ENCODE measurements at regions of chr2 and their contacts with region 1.

Region 1: GRCh38 chr2:207769597-207770486 is at the start of gene FZD5:
- DNase-seq: peak; percentile 92 to 96
- ATAC-seq: peak; percentile 84 to 87
- H3K4me3 ChIP-seq: peak within 1 kb of the TSS; percentile 81 to 95 (median 86)
- H3K27ac ChIP-seq: peak within 1 kb of the TSS; percentile 88 to 98 (median 92)
- H3K4me1 ChIP-seq: peaks cover 13 to 25% of the 10 kb centered on the region in 2 donors
- H3K27me3 ChIP-seq: no peaks in the 10 kb centered on the region
- CTCF ChIP-seq: peak; percentile 23 to 64 (median 60)
- POLR2A ChIP-seq: peak; percentile 97 to 98
- total RNA-seq, gene FZD5: 3.0 to 4.8 (median 3.4) TPM

Region 2: GRCh38 chr2:206159346-206160124 is 1610.3 kb before region 1 on chr2 and contains the starts of genes EEF1B2 and NDUFS1:
- in situ Hi-C with region 1: no loop called
- intact Hi-C with region 1: loop called (anchors 5 kb)
- DNase-seq: peak; percentile 97
- ATAC-seq: peak; percentile 91 to 93
- H3K4me3 ChIP-seq: peak within 1 kb of the TSS; percentile 70 to 95 (median 90)
- H3K27ac ChIP-seq: peak within 1 kb of the TSS; percentile 92 to 97 (median 96)
- H3K4me1 ChIP-seq: peaks cover 35 to 51% of the 10 kb centered on the region in 2 donors
- H3K27me3 ChIP-seq: no peaks in the 10 kb centered on the region
- CTCF ChIP-seq: no peak
- POLR2A ChIP-seq: peak; percentile 62 to 80
- total RNA-seq, gene EEF1B2: 370 to 590 (median 448) TPM
- total RNA-seq, gene NDUFS1: 253 to 385 (median 275) TPM

Region 3: GRCh38 chr2:207625018-207625907 is 144.6 kb before region 1 on chr2 and contains the start of gene METTL21A:
- in situ Hi-C with region 1: no loop called
- intact Hi-C with region 1: loop called (anchors 1 kb)
- DNase-seq: peak; percentile 78 to 88
- ATAC-seq: peak; percentile 79 to 81
- H3K4me3 ChIP-seq: peak within 1 kb of the TSS; percentile 74 to 91 (median 86)
- H3K27ac ChIP-seq: peak within 1 kb of the TSS; percentile 91 to 96 (median 93)
- H3K4me1 ChIP-seq: peaks cover 7 to 11% of the 10 kb centered on the region in 2 donors
- H3K27me3 ChIP-seq: no peaks in the 10 kb centered on the region
- CTCF ChIP-seq: peak in 3 of 5 experiments; percentile 33 to 51 (median 48)
- POLR2A ChIP-seq: peak; percentile 73 to 89
- total RNA-seq, gene METTL21A: 9.1 to 20.8 (median 13.9) TPM

Region 4: DNA sequence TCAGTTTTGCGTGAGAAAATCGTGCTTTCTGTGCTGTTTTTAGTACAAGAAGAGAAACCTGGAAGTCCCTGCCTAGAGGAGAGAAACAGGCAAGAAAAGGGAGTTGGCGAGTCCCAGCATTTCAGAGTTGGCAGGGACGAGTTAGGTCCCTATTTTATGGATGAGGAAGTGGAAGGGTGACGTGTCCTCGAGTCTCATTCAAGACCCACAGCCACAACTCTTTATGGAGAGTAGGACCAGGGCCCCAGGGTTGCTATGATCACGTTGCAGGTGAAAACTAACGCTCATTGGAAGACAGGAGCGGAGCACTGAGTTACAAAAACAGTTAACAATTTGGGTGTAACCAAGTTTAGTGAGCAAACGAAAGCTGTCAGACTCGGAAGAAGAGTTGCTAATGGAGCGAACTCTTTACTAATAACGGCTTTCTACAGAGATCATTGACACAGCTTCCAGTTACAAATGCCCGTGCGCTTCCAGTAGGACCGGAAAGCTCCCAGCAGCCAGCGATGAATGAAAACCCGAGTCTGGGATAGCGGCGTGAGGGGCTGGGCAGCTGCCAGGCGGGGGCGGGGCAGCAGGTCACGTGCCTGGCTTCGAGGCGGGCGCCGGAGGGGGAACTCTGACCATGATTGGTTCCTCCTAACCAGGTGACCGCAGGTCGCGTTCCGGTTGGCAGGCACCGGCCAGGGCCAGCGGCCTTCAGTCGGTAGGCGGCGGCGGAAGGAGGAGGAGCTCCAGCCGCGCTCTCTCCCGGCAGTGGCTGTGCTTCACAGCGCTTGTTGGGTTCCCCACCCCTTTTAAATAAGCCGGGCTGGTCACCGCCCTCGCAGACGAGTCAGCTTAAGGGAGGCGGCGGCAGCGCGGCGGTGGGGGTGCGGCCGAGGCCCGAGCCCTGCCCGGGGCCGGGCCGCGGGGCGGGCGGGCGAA is 58.8 kb before region 1 on chr2 and contains the start of gene CCNYL1:
- in situ Hi-C with region 1: no loop called
- intact Hi-C with region 1: loop called (anchors 2 kb)
- DNase-seq: peak; percentile 99
- ATAC-seq: peak; percentile 96 to 97
- H3K4me3 ChIP-seq: peak within 1 kb of the TSS; percentile 79 to 95 (median 89)
- H3K27ac ChIP-seq: peak within 1 kb of the TSS; percentile 76 to 88 (median 80)
- H3K4me1 ChIP-seq: peaks cover 18 to 19% of the 10 kb centered on the region in 2 donors
- H3K27me3 ChIP-seq: no peaks in the 10 kb centered on the region
- CTCF ChIP-seq: peak in 4 of 5 experiments; percentile 26 to 52 (median 45)
- POLR2A ChIP-seq: peak; percentile 87 to 98
- total RNA-seq, gene CCNYL1: 3.3 to 10.1 (median 7.1) TPM

Region 5: DNA sequence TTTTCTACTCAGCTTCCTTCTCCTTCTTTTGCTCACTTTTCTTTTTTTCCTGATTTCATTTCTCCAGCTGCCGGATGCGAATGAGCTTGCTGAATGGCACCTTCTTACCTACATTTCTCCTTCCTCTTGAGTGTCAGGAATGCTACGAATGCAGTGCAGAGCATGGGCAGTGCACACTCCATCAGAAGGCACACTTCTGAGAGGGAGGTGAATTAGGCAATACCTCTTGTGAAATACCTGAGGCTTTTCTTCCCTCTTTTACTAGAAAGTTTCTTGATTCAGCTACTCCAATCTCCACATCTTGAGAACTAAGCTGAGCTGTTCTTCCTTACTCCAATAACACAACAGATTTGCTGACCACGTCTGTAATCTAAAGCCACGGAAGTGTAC is 204.4 kb after region 1 on chr2:
- in situ Hi-C with region 1: no loop called
- intact Hi-C with region 1: loop called (anchors 5 kb)
- DNase-seq: no peak
- ATAC-seq: no peak
- H3K4me3 ChIP-seq: no peak overlapping the region
- H3K27ac ChIP-seq: no peak overlapping the region
- H3K4me1 ChIP-seq: peaks cover 5 to 9% of the 10 kb centered on the region in 2 donors
- H3K27me3 ChIP-seq: no peaks in the 10 kb centered on the region
- CTCF ChIP-seq: no peak
- POLR2A ChIP-seq: no peak

Region 6: GRCh38 chr2:208025037-208025813 is 255.4 kb after region 1 on chr2 and contains the start of gene PLEKHM3:
- in situ Hi-C with region 1: no loop called
- intact Hi-C with region 1: loop called (anchors 1 kb)
- DNase-seq: peak; percentile 73 to 82
- ATAC-seq: peak; percentile 96 to 99
- H3K4me3 ChIP-seq: peak within 1 kb of the TSS; percentile 83 to 91 (median 88)
- H3K27ac ChIP-seq: peak within 1 kb of the TSS; percentile 78 to 93 (median 88)
- H3K4me1 ChIP-seq: peaks cover 24 to 33% of the 10 kb centered on the region in 2 donors
- H3K27me3 ChIP-seq: no peaks in the 10 kb centered on the region
- CTCF ChIP-seq: no peak
- POLR2A ChIP-seq: peak; percentile 48 to 76
- total RNA-seq, gene PLEKHM3: 5.6 to 8.8 (median 6.8) TPM

Region 7: DNA sequence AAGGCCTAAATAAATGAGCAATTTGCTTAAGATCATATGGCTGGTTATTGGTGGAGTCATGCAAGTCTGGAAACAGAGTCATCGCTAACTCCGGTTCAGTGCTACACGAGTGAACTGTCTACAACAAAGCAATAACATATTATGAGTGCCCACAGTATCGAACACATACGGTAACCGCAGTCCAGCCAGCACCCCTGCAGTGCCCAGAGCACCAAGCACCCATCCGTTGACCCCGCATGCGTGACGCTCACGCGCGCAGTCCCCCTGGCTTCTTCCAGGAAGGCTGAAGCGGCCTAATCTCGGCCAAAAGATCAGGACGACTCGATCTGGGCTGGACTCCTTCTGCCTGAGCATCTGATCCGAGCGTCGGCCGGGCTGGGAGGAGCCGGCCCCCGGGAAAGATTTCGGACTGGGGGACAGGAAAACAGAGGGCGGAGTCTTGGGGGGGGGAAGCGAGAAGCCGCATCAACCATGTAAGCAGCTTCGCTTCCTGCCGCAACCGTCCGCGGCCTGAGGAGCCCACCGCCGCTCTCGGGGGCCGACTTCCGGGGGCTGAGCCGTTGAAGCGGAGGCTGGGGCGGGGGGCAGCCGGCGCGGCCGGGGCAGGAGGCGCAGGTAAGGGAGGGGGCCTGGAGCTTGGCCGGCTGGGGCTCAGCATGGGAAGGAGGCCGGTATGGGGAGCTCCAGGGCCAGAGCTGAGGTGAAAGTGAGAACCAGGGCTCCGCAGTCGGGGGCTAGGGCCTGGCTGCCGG is 496.1 kb after region 1 on chr2 and contains the start of gene PIKFYVE:
- in situ Hi-C with region 1: no loop called
- intact Hi-C with region 1: loop called (anchors 5 kb)
- DNase-seq: peak; percentile 94 to 95
- ATAC-seq: peak; percentile 94 to 97
- H3K4me3 ChIP-seq: peak within 1 kb of the TSS; percentile 71 to 97 (median 96)
- H3K27ac ChIP-seq: peak within 1 kb of the TSS; percentile 91 to 100 (median 98)
- H3K4me1 ChIP-seq: peaks cover 33 to 39% of the 10 kb centered on the region in 2 donors
- H3K27me3 ChIP-seq: no peaks in the 10 kb centered on the region
- CTCF ChIP-seq: peak in 1 of 5 experiments; percentile 18
- POLR2A ChIP-seq: peak; percentile 83 to 88
- total RNA-seq, gene PIKFYVE: 14.0 to 23.9 (median 17.9) TPM